Head of caudate nucleus (tissue), 42 donors: ENCODE measurements at regions of chrX and their contacts with region 1.

Region 1: DNA sequence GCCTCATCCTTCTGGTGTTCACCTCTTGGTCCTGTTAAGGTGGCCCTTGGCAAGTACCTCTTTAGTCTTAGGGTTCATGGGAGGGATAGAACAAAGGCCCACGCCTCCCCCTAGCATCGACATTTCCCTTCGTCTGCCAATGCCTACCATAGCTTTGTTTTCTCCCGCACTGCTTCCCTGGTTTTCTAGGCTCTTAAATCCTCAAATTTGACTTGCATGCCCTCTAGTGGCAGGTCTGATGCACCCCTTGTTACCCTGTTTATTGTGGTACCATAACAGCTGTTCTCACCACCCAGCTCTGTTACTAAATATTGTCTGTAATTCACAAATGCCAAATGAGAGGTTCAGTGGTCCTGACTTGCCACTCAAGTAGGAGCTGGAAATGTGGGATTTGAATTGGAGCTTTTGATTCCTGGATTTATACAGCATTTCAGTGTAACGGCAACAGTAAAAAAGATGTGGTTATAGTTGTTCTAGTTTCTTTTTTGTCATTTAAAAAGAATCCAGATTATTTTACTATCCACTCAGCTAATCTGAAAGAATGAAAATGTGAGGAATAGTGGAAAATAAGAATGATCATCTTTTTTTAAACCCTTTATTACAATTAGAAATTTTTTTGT is 100.1 kb downstream of the REPS2 start:
- DNase-seq: peak; percentile 5 to 88 (median 65)

Region 2: GRCh38 chrX:16882702-16883486 is 163.7 kb before region 1 on chrX:
- intact Hi-C with region 1: loop called (anchors 5 kb)
- DNase-seq: peak; percentile 21 to 88 (median 72)

Region 3: GRCh38 chrX:17453788-17454187 is 407.2 kb after region 1 on chrX:
- intact Hi-C with region 1: no loop called
- DNase-seq: no peak